Gastrocnemius medialis (tissue), 4 donors: ENCODE measurements at regions of chr1 and their contacts with region 1.

Region 1: DNA sequence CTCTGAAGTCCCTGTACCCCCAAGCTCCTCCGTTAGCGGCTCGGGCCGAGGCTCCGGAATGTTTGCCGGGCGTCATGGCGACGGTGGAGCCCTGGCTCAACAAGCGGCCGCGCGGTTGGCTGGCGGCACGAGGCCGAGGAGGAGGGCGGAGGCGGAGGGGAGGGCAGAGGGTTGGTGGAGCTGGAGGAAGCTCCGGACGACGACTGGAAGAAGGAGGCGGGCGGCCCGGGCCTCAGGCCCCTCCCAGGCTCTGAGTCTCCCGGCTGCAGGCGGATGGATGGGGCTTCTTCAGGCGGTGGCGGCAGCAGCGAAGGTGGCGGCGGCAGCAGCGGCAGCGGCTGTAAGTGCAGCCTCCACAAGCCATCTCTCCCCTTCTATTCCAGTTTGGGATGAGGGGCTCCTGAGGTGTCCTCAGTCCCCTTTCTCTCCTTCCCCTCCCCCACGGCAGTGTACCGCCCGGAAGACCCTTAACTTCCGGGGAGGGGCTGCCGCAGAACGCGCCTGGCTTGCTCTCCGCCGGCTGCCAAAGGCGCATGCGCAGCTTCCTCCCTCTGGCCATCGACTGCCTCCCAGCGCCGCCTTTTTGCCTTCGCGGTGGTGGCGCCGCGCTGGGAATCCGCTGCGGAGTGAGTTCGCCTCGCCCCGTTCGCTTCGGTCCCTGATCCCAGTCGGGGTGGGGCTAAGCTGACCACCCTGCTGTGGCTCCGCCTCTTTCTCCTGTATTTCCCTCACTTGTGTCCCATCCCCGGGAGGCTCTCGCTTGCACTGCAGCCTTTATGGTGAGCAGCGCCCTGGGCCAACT is at the starts of genes DNAI4 and MIER1:
- DNase-seq: peak; percentile 96 to 97
- ATAC-seq: peak; percentile 93 to 96
- H3K4me3 ChIP-seq: peak within 1 kb of the TSS; percentile 69 to 96 (median 86)
- H3K27ac ChIP-seq: peak within 1 kb of the TSS; percentile 85 to 97 (median 92)
- H3K4me1 ChIP-seq: peaks cover 29 to 35% of the 10 kb centered on the region in 2 donors
- H3K27me3 ChIP-seq: no peaks in the 10 kb centered on the region
- CTCF ChIP-seq: peak; percentile 23 to 41 (median 25)
- POLR2A ChIP-seq: peak; percentile 56 to 68
- total RNA-seq, gene DNAI4: 0.19 to 0.41 (median 0.29) TPM in 3 of 4 donors, not detected in the other
- total RNA-seq, gene MIER1: 14.8 to 21.7 (median 15.4) TPM

Region 2: DNA sequence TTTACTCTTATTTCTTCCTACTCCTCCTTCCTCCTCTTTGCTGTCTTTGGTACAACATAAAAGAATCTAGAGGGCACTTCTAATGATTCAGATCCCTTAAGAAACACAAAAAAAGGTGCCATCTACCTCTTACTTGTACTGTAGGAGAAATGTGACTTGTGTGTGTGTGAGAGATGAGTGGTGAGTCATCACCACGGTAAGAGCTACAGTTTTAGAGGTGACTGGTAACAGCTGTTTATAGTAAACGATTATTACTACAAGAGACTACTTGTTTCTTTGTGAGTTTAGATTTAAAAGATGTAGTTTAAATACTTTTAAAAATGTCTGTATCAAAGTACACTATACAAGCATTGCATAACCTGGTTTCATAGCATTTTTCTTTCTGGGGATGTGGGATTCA is 88.6 kb after region 1 on chr1:
- in situ Hi-C with region 1: no loop called
- intact Hi-C with region 1: no loop called
- DNase-seq: peak in 1 of 2 donors; percentile 34
- ATAC-seq: peak; percentile 91 to 99
- H3K4me3 ChIP-seq: no peak overlapping the region
- H3K27ac ChIP-seq: peak overlapping the region; percentile 42 to 58 (median 52)
- H3K4me1 ChIP-seq: no peaks in the 10 kb centered on the region
- H3K27me3 ChIP-seq: no peaks in the 10 kb centered on the region
- CTCF ChIP-seq: no peak
- POLR2A ChIP-seq: no peak

Region 3: GRCh38 chr1:67430352-67431155 is 505.6 kb after region 1 on chr1 and contains the start of gene SERBP1:
- in situ Hi-C with region 1: no loop called
- intact Hi-C with region 1: loop called (anchors 10 kb)
- DNase-seq: peak; percentile 94 to 97
- ATAC-seq: peak; percentile 87
- H3K4me3 ChIP-seq: peak within 1 kb of the TSS; percentile 82 to 96 (median 90)
- H3K27ac ChIP-seq: peak within 1 kb of the TSS; percentile 93 to 99 (median 97)
- H3K4me1 ChIP-seq: peaks cover 53 to 61% of the 10 kb centered on the region in 2 donors
- H3K27me3 ChIP-seq: no peaks in the 10 kb centered on the region
- CTCF ChIP-seq: no peak
- POLR2A ChIP-seq: peak; percentile 91 to 95
- total RNA-seq, gene SERBP1: 249 to 353 (median 311) TPM